Activated naive CD4-positive, alpha-beta T cell treated with anti-CD3 and anti-CD28 coated beads for 36 hours (primary cell): ENCODE measurements at regions of chr6 and their contacts with region 1.

Region 1: GRCh38 chr6:32971581-32972352 is 3.4 kb downstream of the BRD2 start:
- DNase-seq: peak; percentile 100
- H3K4me3 Mint-ChIP-seq: peak overlapping the region; percentile 93
- H3K27ac Mint-ChIP-seq: peak overlapping the region; percentile 100
- H3K4me1 Mint-ChIP-seq: peaks cover 24% of the 10 kb centered on the region
- H3K27me3 Mint-ChIP-seq: no peaks in the 10 kb centered on the region

Region 2: GRCh38 chr6:32177788-32178546 is 793.8 kb before region 1 on chr6 and contains the start of gene RNF5:
- CTCF ChIA-PET with region 1: no interaction called
- intact Hi-C with region 1: loop called (anchors 5 kb)
- DNase-seq: peak; percentile 97
- H3K4me3 Mint-ChIP-seq: peak within 1 kb of the TSS; percentile 91
- H3K27ac Mint-ChIP-seq: peak within 1 kb of the TSS; percentile 96
- H3K4me1 Mint-ChIP-seq: peaks cover 61% of the 10 kb centered on the region
- H3K27me3 Mint-ChIP-seq: no peaks in the 10 kb centered on the region
- total RNA-seq, gene RNF5: 39.5 to 39.9 TPM

Region 3: GRCh38 chr6:32741031-32741960 is 230.5 kb before region 1 on chr6 and contains the start of gene HLA-DQA2:
- CTCF ChIA-PET with region 1: no interaction called
- intact Hi-C with region 1: no loop called
- DNase-seq: no peak
- H3K4me3 Mint-ChIP-seq: no peak within 1 kb of the TSS
- H3K27ac Mint-ChIP-seq: no peak within 1 kb of the TSS
- H3K4me1 Mint-ChIP-seq: no peaks in the 10 kb centered on the region
- H3K27me3 Mint-ChIP-seq: peaks cover 15% of the 10 kb centered on the region
- total RNA-seq, gene HLA-DQA2: not detected

Region 4: GRCh38 chr6:32761072-32761471 is 210.7 kb before region 1 on chr6:
- CTCF ChIA-PET with region 1: no interaction called
- intact Hi-C with region 1: no loop called
- DNase-seq: no peak
- H3K4me3 Mint-ChIP-seq: no peak overlapping the region
- H3K27ac Mint-ChIP-seq: no peak overlapping the region
- H3K4me1 Mint-ChIP-seq: no peaks in the 10 kb centered on the region
- H3K27me3 Mint-ChIP-seq: peaks cover 27% of the 10 kb centered on the region

Region 5: DNA sequence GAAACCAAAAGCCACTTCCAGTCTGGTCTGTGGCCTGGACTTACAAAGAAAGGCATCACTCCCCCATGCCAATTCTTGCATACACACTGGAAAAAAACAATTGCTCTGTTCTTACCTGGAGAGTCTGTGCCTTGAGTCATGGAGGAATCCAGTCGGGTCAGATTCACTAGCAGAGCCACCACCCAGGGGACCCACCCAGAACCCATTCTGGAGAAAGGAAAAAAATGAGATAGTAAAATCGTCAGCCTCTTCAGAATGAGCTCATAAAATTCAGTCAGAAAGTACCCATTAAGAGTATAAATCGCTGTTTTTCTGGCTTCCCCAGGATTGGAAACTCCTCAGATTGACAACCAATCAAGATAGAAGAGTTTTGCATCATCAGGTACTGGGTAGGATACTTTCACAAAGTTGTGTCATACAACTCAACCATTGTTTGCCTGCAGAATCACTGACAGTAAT is 155.0 kb before region 1 on chr6 and contains the start of gene HLA-DOB:
- CTCF ChIA-PET with region 1: no interaction called
- intact Hi-C with region 1: no loop called
- DNase-seq: no peak
- H3K4me3 Mint-ChIP-seq: no peak within 1 kb of the TSS
- H3K27ac Mint-ChIP-seq: no peak within 1 kb of the TSS
- H3K4me1 Mint-ChIP-seq: peaks cover 2% of the 10 kb centered on the region
- H3K27me3 Mint-ChIP-seq: no peaks in the 10 kb centered on the region
- total RNA-seq, gene HLA-DOB: 0.91 to 1.1 TPM

Region 6: GRCh38 chr6:32843979-32844838 is 127.6 kb before region 1 on chr6 and contains the start of gene PSMB8:
- CTCF ChIA-PET with region 1: interaction called, 10 read pairs
- intact Hi-C with region 1: loop called (anchors 1 kb)
- DNase-seq: peak; percentile 100
- H3K4me3 Mint-ChIP-seq: peak within 1 kb of the TSS; percentile 98
- H3K27ac Mint-ChIP-seq: peak within 1 kb of the TSS; percentile 99
- H3K4me1 Mint-ChIP-seq: peaks cover 71% of the 10 kb centered on the region
- H3K27me3 Mint-ChIP-seq: no peaks in the 10 kb centered on the region
- total RNA-seq, gene PSMB8: 286 to 308 TPM

Region 7: GRCh38 chr6:32940656-32941213 is 31.0 kb before region 1 on chr6 and contains the start of gene HLA-DMB:
- CTCF ChIA-PET with region 1: interaction called, 90 read pairs
- intact Hi-C with region 1: loop called (anchors 1 kb)
- DNase-seq: peak; percentile 65
- H3K4me3 Mint-ChIP-seq: peak within 1 kb of the TSS; percentile 79
- H3K27ac Mint-ChIP-seq: peak within 1 kb of the TSS; percentile 78
- H3K4me1 Mint-ChIP-seq: peaks cover 57% of the 10 kb centered on the region
- H3K27me3 Mint-ChIP-seq: no peaks in the 10 kb centered on the region
- total RNA-seq, gene HLA-DMB: 0.76 to 1.3 TPM

Region 8: GRCh38 chr6:33018904-33019303 is 47.1 kb after region 1 on chr6:
- CTCF ChIA-PET with region 1: no interaction called
- intact Hi-C with region 1: no loop called
- DNase-seq: no peak
- H3K4me3 Mint-ChIP-seq: peak overlapping the region; percentile 25
- H3K27ac Mint-ChIP-seq: no peak overlapping the region
- H3K4me1 Mint-ChIP-seq: peaks cover 12% of the 10 kb centered on the region
- H3K27me3 Mint-ChIP-seq: no peaks in the 10 kb centered on the region

Region 9: GRCh38 chr6:33200219-33201146 is 228.7 kb after region 1 on chr6 and contains the starts of genes RXRB and SLC39A7:
- CTCF ChIA-PET with region 1: no interaction called
- intact Hi-C with region 1: loop called (anchors 2 kb)
- DNase-seq: peak; percentile 100
- H3K4me3 Mint-ChIP-seq: peak within 1 kb of the TSS; percentile 98
- H3K27ac Mint-ChIP-seq: peak within 1 kb of the TSS; percentile 97
- H3K4me1 Mint-ChIP-seq: peaks cover 60% of the 10 kb centered on the region
- H3K27me3 Mint-ChIP-seq: no peaks in the 10 kb centered on the region
- total RNA-seq, gene RXRB: 50.4 to 50.6 TPM
- total RNA-seq, gene SLC39A7: 35.9 to 39.5 TPM

Region 10: DNA sequence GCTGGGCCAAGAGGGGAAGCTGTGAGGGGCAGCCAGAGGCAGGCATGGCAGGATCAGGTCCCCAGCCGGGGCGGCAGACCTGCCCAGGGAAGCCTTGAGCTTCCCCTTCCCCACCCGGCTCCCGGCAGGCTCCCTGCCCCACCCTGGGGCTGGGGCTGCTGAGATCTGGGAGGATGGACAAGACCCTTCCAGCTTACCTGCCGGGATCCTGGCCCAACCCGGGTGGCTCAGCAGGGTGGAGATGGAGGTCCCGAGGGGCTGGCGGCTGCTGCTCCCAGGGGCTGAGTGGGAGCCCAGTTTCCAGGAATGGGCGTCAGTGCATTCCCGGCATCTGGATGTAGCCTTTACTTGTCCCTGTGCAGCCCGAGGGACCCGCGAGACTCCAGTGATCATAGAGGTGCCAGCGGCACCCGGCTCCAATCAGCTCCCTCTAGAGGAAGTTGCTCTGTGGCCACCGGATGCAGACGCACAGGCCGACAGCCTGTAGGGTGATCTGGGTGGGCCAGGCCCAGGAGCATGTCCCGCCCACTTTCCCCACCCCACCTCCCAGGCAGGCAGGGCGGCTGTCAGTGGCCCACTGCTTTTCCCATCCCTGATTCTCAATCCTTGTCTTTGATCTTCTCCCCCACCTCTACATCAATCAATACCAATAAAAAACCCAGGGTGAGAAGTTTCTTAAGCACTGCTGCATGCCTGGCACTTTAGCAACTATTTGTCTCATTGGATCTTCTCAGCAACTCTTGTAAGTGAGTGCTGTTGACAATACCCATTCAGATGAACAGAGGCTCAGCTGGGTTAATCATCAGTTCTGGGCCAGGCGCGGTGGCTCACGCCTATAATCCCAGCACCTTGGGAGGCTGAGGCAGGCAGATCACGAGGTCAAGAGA is 608.3 kb after region 1 on chr6 and contains the start of gene BAK1:
- CTCF ChIA-PET with region 1: no interaction called
- intact Hi-C with region 1: loop called (anchors 10 kb)
- DNase-seq: peak; percentile 92
- H3K4me3 Mint-ChIP-seq: peak within 1 kb of the TSS; percentile 86
- H3K27ac Mint-ChIP-seq: peak within 1 kb of the TSS; percentile 96
- H3K4me1 Mint-ChIP-seq: peaks cover 35% of the 10 kb centered on the region
- H3K27me3 Mint-ChIP-seq: no peaks in the 10 kb centered on the region
- total RNA-seq, gene BAK1: 38.3 to 41.1 TPM